Common myeloid progenitor, CD34-positive (primary cell): ENCODE measurements at regions of chr11 and their contacts with region 1.

Region 1: GRCh38 chr11:128948589-128948988 is 5.9 kb upstream of the TP53AIP1 start:
- DNase-seq: peak; percentile 48 to 62 (median 55)
- H3K4me3 ChIP-seq: no peak overlapping the region
- H3K27ac ChIP-seq: no peak overlapping the region
- H3K4me1 ChIP-seq: no peaks in the 10 kb centered on the region
- H3K27me3 ChIP-seq: peaks cover 0 to 4% (median 0%) of the 10 kb centered on the region in 5 experiments

Region 2: GRCh38 chr11:128874427-128874826 is 74.2 kb before region 1 on chr11:
- CTCF ChIA-PET with region 1: interaction called, 61 read pairs
- POLR2A ChIA-PET with region 1: no interaction called
- DNase-seq: no peak
- H3K4me3 ChIP-seq: no peak overlapping the region
- H3K27ac ChIP-seq: no peak overlapping the region
- H3K4me1 ChIP-seq: no peaks in the 10 kb centered on the region
- H3K27me3 ChIP-seq: peaks cover 0 to 12% (median 0%) of the 10 kb centered on the region in 5 experiments

Region 3: GRCh38 chr11:128879817-128880216 is 68.8 kb before region 1 on chr11:
- CTCF ChIA-PET with region 1: interaction called, 640 read pairs
- POLR2A ChIA-PET with region 1: interaction called, 9 read pairs
- DNase-seq: no peak
- H3K4me3 ChIP-seq: no peak overlapping the region
- H3K27ac ChIP-seq: no peak overlapping the region
- H3K4me1 ChIP-seq: no peaks in the 10 kb centered on the region
- H3K27me3 ChIP-seq: peaks cover 0 to 10% (median 7%) of the 10 kb centered on the region in 5 experiments

Region 4: DNA sequence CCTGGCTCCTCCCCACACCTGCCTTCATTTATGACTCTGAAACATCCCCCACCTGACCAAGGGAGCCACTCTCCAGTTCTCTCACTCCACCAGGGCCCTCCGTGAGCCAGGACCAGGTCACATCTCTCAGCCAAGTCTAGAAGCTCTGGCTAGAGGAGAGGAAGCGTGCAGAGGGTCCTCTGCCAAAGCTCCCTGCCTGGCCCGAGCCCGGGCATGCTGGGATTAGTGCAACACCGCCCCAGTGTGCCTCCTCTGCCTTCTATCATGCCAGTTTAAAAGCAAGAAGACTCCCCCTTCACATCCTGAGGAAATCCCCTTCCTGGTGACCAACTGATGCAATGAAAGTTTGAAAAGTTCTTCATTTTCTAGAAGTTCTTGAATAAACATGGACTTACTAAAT is 29.4 kb before region 1 on chr11:
- CTCF ChIA-PET with region 1: interaction called, 25 read pairs
- POLR2A ChIA-PET with region 1: no interaction called
- DNase-seq: peak in 2 of 3 donors; percentile 68 to 72
- H3K4me3 ChIP-seq: peak overlapping the region in 1 of 7 experiments; percentile 12
- H3K27ac ChIP-seq: no peak overlapping the region
- H3K4me1 ChIP-seq: peaks cover 0 to 34% (median 20%) of the 10 kb centered on the region in 4 experiments
- H3K27me3 ChIP-seq: peaks cover 0 to 2% (median 0%) of the 10 kb centered on the region in 5 experiments

Region 5: GRCh38 chr11:128928400-128928799 is 20.2 kb before region 1 on chr11:
- CTCF ChIA-PET with region 1: interaction called, 72 read pairs
- POLR2A ChIA-PET with region 1: no interaction called
- DNase-seq: peak in 2 of 3 donors; percentile 48 to 51
- H3K4me3 ChIP-seq: peak overlapping the region in 1 of 7 experiments; percentile 11
- H3K27ac ChIP-seq: no peak overlapping the region
- H3K4me1 ChIP-seq: peaks cover 0 to 6% (median 0%) of the 10 kb centered on the region in 4 experiments
- H3K27me3 ChIP-seq: peaks cover 0 to 9% (median 0%) of the 10 kb centered on the region in 5 experiments

Region 6: DNA sequence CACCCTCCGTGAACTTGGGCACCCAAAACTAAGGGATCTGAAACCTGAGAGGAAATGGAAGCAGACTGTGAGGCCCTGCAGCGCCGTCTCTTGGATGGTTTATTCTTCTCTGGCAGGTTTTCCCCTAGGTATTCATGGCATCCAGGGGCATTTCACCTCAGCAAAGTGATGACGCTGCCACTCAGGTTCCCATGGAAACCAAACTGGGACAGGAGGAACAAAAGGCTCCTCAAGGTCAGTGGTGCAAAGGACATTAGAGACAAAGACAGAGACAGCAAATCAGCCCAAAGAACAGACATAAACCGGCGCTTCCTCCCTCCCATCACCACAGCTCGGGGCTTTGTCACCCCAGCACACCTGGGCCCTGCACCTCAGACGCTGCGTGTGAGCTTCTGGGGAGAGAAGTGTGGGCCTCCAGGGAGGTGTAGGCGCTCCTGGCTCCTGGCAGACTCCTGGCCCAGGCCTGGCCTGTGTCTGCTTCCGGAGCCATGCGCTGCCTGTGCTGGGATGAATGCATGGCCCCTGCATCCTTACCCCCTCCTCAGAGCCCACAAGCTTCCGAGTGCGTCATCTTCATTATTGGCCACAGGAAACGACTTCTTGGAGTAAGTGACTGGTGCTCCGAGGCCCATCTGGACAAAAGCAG is 11.9 kb before region 1 on chr11:
- CTCF ChIA-PET with region 1: interaction called, 72 read pairs
- POLR2A ChIA-PET with region 1: no interaction called
- DNase-seq: no peak
- H3K4me3 ChIP-seq: no peak overlapping the region
- H3K27ac ChIP-seq: no peak overlapping the region
- H3K4me1 ChIP-seq: no peaks in the 10 kb centered on the region
- H3K27me3 ChIP-seq: peaks cover 0 to 5% (median 0%) of the 10 kb centered on the region in 5 experiments

Region 7: GRCh38 chr11:128963744-128964325 is 15.2 kb after region 1 on chr11:
- CTCF ChIA-PET with region 1: interaction called, 35 read pairs
- POLR2A ChIA-PET with region 1: no interaction called
- DNase-seq: no peak
- H3K4me3 ChIP-seq: no peak overlapping the region
- H3K27ac ChIP-seq: no peak overlapping the region
- H3K4me1 ChIP-seq: peaks cover 0 to 13% (median 3%) of the 10 kb centered on the region in 4 experiments
- H3K27me3 ChIP-seq: no peaks in the 10 kb centered on the region